CD8-positive, alpha-beta T cell (primary cell): ENCODE measurements at regions of chr4 and their contacts with region 1.

Region 1: GRCh38 chr4:88591787-88592599 is at the start of gene HERC3:
- DNase-seq: peak; percentile 75 to 94 (median 88)
- ATAC-seq: peak; percentile 84
- H3K4me3 ChIP-seq: peak within 1 kb of the TSS; percentile 89 to 96
- H3K4me3 Mint-ChIP-seq: peak within 1 kb of the TSS; percentile 99
- H3K27ac ChIP-seq: peak within 1 kb of the TSS; percentile 82 to 85
- H3K27ac Mint-ChIP-seq: peak within 1 kb of the TSS; percentile 97
- H3K4me1 ChIP-seq: peaks cover 22% of the 10 kb centered on the region
- H3K4me1 Mint-ChIP-seq: peaks cover 43% of the 10 kb centered on the region
- H3K27me3 ChIP-seq: no peaks in the 10 kb centered on the region
- H3K27me3 Mint-ChIP-seq: no peaks in the 10 kb centered on the region
- CTCF ChIP-seq: no peak
- total RNA-seq, gene HERC3: 50.4 to 62.4 TPM

Region 2: DNA sequence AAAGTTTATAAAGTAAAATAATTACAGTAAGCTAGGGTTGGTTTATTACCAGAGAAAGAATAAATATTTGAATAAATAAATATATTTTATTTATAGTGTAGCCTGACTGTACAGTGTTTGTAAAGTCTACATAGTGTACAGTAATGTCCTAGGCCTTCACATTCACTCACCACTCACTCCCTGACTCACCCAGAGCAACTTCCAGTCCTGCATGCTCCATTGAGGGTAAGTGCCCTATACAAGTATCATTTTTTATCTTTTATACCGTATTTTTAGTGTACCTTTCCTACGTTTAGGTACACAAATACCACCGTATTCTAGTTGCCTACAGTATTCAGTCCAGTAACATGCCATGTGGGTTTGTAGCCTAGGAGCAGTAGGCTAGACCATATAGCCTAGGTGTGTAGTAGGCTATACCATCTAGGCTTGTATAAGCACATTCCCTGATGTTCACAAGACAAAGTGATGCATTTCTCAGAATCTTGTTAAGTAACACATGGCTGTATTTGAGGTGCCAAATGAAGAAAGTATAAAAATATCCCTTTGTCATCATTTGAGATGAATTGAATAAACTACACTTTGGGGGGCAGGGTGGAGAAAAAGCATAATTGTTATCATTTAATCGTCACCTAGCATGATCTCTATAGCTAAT is 1356.8 kb before region 1 on chr4:
- CTCF ChIA-PET with region 1: no interaction called
- POLR2A ChIA-PET with region 1: no interaction called
- intact Hi-C with region 1: loop called in 1 of 2 experiments (anchors 10 kb)
- DNase-seq: peak in 1 of 9 experiments; percentile 5
- ATAC-seq: no peak
- H3K4me3 ChIP-seq: peak overlapping the region; percentile 52 to 61
- H3K4me3 Mint-ChIP-seq: peak overlapping the region; percentile 79
- H3K27ac ChIP-seq: no peak overlapping the region
- H3K27ac Mint-ChIP-seq: no peak overlapping the region
- H3K4me1 ChIP-seq: peaks cover 4% of the 10 kb centered on the region
- H3K4me1 Mint-ChIP-seq: peaks cover 2% of the 10 kb centered on the region
- H3K27me3 ChIP-seq: no peaks in the 10 kb centered on the region
- H3K27me3 Mint-ChIP-seq: no peaks in the 10 kb centered on the region
- CTCF ChIP-seq: no peak

Region 3: GRCh38 chr4:88409206-88409605 is 182.8 kb before region 1 on chr4:
- CTCF ChIA-PET with region 1: no interaction called
- POLR2A ChIA-PET with region 1: no interaction called
- intact Hi-C with region 1: no loop called
- DNase-seq: no peak
- ATAC-seq: no peak
- H3K4me3 ChIP-seq: no peak overlapping the region
- H3K4me3 Mint-ChIP-seq: no peak overlapping the region
- H3K27ac ChIP-seq: no peak overlapping the region
- H3K27ac Mint-ChIP-seq: no peak overlapping the region
- H3K4me1 ChIP-seq: no peaks in the 10 kb centered on the region
- H3K4me1 Mint-ChIP-seq: no peaks in the 10 kb centered on the region
- H3K27me3 ChIP-seq: no peaks in the 10 kb centered on the region
- H3K27me3 Mint-ChIP-seq: no peaks in the 10 kb centered on the region
- CTCF ChIP-seq: no peak

Region 4: DNA sequence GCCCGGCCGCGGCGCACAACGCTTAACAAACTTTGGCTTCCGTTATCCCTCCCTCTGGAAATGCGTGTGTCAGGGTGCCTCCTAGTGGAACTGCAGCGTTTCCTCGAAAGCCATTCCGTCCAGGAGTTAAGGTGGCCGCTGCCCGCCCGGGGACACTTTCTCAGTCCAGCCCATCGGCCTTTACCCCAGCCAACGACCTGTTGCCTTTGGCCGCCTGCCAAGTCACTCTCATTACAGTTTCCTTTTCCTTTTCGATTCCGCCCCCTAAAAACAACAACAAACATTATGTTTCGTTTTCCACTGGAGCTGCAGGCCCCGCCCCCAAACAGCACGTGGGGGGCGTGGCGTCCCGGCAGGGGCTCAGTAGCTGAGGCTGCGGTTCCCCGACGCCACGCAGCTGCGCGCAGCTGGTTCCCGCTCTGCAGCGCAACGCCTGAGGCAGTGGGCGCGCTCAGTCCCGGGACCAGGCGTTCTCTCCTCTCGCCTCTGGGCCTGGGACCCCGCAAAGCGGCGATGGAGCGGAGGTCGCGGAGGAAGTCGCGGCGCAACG is 135.2 kb before region 1 on chr4 and contains the start of gene HERC5:
- CTCF ChIA-PET with region 1: no interaction called
- POLR2A ChIA-PET with region 1: interaction called, 7 read pairs
- intact Hi-C with region 1: loop called (anchors 2 kb)
- DNase-seq: peak; percentile 83 to 96 (median 91)
- ATAC-seq: peak; percentile 95
- H3K4me3 ChIP-seq: peak within 1 kb of the TSS; percentile 79 to 87
- H3K4me3 Mint-ChIP-seq: peak within 1 kb of the TSS; percentile 100
- H3K27ac ChIP-seq: peak within 1 kb of the TSS; percentile 63 to 74
- H3K27ac Mint-ChIP-seq: peak within 1 kb of the TSS; percentile 100
- H3K4me1 ChIP-seq: peaks cover 13% of the 10 kb centered on the region
- H3K4me1 Mint-ChIP-seq: peaks cover 33% of the 10 kb centered on the region
- H3K27me3 ChIP-seq: no peaks in the 10 kb centered on the region
- H3K27me3 Mint-ChIP-seq: no peaks in the 10 kb centered on the region
- CTCF ChIP-seq: no peak
- total RNA-seq, gene HERC5: 13.2 to 13.5 TPM

Region 5: DNA sequence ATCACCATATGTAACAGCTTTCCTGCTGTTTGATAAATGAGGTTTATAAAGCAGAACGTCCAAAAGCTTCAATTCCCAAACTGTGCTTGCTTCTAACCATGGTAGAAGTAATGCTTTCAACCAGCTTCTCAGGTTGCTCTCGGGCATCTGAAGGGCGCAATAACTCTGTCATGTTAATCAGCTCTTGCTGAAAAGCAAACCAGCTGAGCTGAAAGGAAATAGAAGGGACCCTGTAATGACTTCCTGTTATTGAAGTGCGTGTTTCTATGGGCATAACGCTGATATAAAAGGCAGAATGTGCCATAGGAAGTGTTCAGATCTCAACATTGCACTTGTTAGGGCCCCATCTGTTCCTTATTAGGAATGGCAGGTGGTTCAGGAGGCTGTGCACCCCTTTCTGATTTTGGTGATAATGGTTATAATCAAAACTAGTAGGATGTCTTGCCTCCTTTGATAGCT is 21.5 kb after region 1 on chr4:
- CTCF ChIA-PET with region 1: interaction called, 6 read pairs
- POLR2A ChIA-PET with region 1: interaction called, 105 read pairs
- intact Hi-C with region 1: loop called (anchors 1 kb)
- DNase-seq: peak in 8 of 9 experiments; percentile 18 to 88 (median 49)
- ATAC-seq: peak; percentile 92
- H3K4me3 ChIP-seq: peak overlapping the region; percentile 16 to 19
- H3K4me3 Mint-ChIP-seq: peak overlapping the region; percentile 78
- H3K27ac ChIP-seq: peak overlapping the region; percentile 64 to 81
- H3K27ac Mint-ChIP-seq: peak overlapping the region; percentile 96
- H3K4me1 ChIP-seq: peaks cover 52% of the 10 kb centered on the region
- H3K4me1 Mint-ChIP-seq: peaks cover 87% of the 10 kb centered on the region
- H3K27me3 ChIP-seq: no peaks in the 10 kb centered on the region
- H3K27me3 Mint-ChIP-seq: no peaks in the 10 kb centered on the region
- CTCF ChIP-seq: no peak

Region 6: DNA sequence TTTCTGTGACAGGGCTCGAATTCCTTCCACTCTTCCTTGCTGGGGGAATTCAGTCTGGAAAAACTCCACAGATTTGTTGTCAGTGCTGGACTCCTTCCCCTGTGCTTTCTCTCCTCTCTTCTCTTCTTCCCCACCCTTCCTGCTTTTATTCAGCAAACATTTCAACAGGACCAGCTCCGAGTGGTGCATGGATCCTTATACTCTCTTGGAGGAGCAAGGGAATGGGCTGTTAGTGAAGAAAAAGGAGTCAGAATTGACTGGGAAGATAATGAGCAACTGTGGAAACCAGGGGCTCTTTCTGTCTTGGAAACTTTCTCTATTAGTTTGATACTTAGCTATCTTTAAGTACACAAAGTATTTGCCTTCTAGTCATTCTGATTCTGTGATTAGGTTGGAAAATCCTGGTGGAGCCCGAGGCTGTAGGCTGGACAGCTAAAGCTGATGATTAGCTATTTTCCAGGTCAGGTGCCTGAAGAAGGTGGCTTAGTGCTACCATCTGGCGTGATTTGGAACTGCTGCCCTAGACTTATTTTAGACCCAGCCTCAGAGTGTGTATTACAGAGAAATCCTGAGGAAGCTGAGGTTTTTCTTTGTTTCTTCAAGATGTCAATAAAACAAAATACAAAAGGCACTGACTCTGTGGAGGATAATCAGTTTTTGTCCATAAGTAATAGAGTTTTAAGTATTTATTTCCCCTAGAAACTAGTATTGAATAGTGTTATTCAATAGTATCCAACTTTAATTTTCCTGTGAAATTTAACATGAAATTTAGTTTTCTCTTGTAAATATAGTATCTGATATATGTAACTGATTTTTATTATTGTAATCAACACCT is 67.3 kb after region 1 on chr4:
- CTCF ChIA-PET with region 1: interaction called, 3 read pairs
- POLR2A ChIA-PET with region 1: no interaction called
- intact Hi-C with region 1: loop called (anchors 2 to 5 kb)
- DNase-seq: peak in 5 of 9 experiments; percentile 30 to 62 (median 40)
- ATAC-seq: peak; percentile 78
- H3K4me3 ChIP-seq: no peak overlapping the region
- H3K4me3 Mint-ChIP-seq: no peak overlapping the region
- H3K27ac ChIP-seq: no peak overlapping the region
- H3K27ac Mint-ChIP-seq: peak overlapping the region; percentile 10
- H3K4me1 ChIP-seq: no peaks in the 10 kb centered on the region
- H3K4me1 Mint-ChIP-seq: peaks cover 2% of the 10 kb centered on the region
- H3K27me3 ChIP-seq: no peaks in the 10 kb centered on the region
- H3K27me3 Mint-ChIP-seq: no peaks in the 10 kb centered on the region
- CTCF ChIP-seq: peak; percentile 72

Region 7: DNA sequence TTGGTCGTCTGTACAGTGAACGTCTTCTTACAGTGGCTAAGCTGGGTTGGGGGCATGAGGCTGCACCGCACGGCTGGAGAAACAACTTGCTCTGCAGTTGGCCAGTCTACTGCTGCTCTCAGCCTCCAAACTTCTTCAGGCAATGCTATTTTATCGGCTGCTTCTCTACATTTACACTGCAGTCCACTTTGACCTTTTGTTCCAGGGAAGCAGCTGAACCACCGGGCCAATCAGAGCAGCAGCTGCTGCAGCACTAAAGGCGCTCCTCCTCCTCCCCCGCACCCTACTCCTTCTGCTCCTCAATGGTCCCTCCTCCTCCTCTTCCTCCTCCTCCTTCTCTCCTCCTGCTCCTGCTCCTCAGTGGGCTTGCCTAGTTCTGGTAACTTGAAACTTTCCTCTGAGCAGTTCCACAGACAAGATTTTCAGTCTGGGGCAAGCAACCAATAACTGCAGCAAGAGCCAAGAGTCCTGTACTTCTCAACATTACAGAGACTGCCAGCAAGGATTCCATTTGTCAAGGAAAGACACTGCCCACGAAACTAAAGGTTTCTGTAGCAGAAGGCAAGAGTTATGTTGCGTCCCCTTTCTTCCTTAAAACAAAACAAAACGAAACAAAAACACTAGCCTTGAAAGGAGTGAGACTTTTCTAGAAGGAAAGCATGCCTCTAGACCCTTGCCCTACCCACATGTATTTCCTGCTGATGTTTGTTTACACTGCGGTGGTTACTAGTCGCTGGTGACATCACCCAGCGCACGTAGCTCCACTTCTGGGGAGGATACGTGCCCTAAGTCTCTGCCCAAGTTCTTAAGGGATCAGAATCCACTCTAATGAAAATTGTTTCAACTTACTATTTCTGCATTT is 231.3 kb after region 1 on chr4:
- CTCF ChIA-PET with region 1: no interaction called
- POLR2A ChIA-PET with region 1: no interaction called
- intact Hi-C with region 1: loop called in 1 of 2 experiments (anchors 2 kb)
- DNase-seq: peak; percentile 36 to 94 (median 61)
- ATAC-seq: peak; percentile 95
- H3K4me3 ChIP-seq: peak overlapping the region; percentile 42 to 51
- H3K4me3 Mint-ChIP-seq: peak overlapping the region; percentile 93
- H3K27ac ChIP-seq: peak overlapping the region; percentile 52 to 83
- H3K27ac Mint-ChIP-seq: peak overlapping the region; percentile 94
- H3K4me1 ChIP-seq: peaks cover 5% of the 10 kb centered on the region
- H3K4me1 Mint-ChIP-seq: peaks cover 29% of the 10 kb centered on the region
- H3K27me3 ChIP-seq: peaks cover 0 to 2% of the 10 kb centered on the region in 2 experiments
- H3K27me3 Mint-ChIP-seq: no peaks in the 10 kb centered on the region
- CTCF ChIP-seq: no peak

Region 8: GRCh38 chr4:89184407-89184806 is 592.4 kb after region 1 on chr4:
- CTCF ChIA-PET with region 1: no interaction called
- POLR2A ChIA-PET with region 1: no interaction called
- intact Hi-C with region 1: no loop called
- DNase-seq: no peak
- ATAC-seq: no peak
- H3K4me3 ChIP-seq: no peak overlapping the region
- H3K4me3 Mint-ChIP-seq: no peak overlapping the region
- H3K27ac ChIP-seq: no peak overlapping the region
- H3K27ac Mint-ChIP-seq: no peak overlapping the region
- H3K4me1 ChIP-seq: no peaks in the 10 kb centered on the region
- H3K4me1 Mint-ChIP-seq: no peaks in the 10 kb centered on the region
- H3K27me3 ChIP-seq: no peaks in the 10 kb centered on the region
- H3K27me3 Mint-ChIP-seq: peaks cover 11% of the 10 kb centered on the region
- CTCF ChIP-seq: no peak

Region 9: DNA sequence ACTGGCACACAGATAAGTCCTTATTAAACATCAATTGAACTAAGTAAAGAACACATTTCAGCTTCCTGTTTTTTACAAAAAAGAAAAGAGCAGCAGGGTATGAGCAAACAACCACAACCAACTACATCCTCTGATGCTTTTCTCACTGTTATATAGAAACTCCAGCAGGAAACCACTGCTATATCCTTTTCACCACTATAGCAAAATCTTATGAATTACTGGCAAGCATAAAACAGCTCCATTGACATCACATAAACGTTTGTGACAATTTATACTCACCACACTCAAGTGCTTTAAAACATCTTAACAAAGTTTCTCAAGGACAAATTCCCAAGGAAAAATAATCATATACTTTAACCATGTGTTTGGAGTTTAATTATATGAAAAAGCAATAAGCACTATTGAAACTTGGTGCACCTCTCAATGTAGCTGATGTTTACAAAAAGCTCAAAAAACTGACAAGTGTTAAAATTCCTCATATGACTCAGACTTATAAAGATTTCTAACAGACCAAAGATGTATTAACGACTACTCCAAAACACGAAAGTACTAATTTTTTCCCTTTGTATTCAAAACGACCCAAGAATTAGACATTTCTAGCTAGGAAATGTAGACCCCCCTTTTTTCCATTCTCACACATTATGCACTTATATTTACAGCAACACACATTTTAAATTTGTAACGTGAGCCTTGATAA is 702.7 kb after region 1 on chr4:
- CTCF ChIA-PET with region 1: no interaction called
- POLR2A ChIA-PET with region 1: no interaction called
- intact Hi-C with region 1: loop called in 1 of 2 experiments (anchors 5 kb)
- DNase-seq: peak in 2 of 9 experiments; percentile 78 to 88
- ATAC-seq: peak; percentile 74
- H3K4me3 ChIP-seq: peak overlapping the region in 1 of 2 experiments; percentile 21
- H3K4me3 Mint-ChIP-seq: peak overlapping the region; percentile 60
- H3K27ac ChIP-seq: peak overlapping the region; percentile 42 to 82
- H3K27ac Mint-ChIP-seq: peak overlapping the region; percentile 89
- H3K4me1 ChIP-seq: peaks cover 80% of the 10 kb centered on the region
- H3K4me1 Mint-ChIP-seq: peaks cover 89% of the 10 kb centered on the region
- H3K27me3 ChIP-seq: no peaks in the 10 kb centered on the region
- H3K27me3 Mint-ChIP-seq: no peaks in the 10 kb centered on the region
- CTCF ChIP-seq: no peak